Panc1 (cell line): ENCODE measurements at regions of chr2 and their contacts with region 1.

Region 1: DNA sequence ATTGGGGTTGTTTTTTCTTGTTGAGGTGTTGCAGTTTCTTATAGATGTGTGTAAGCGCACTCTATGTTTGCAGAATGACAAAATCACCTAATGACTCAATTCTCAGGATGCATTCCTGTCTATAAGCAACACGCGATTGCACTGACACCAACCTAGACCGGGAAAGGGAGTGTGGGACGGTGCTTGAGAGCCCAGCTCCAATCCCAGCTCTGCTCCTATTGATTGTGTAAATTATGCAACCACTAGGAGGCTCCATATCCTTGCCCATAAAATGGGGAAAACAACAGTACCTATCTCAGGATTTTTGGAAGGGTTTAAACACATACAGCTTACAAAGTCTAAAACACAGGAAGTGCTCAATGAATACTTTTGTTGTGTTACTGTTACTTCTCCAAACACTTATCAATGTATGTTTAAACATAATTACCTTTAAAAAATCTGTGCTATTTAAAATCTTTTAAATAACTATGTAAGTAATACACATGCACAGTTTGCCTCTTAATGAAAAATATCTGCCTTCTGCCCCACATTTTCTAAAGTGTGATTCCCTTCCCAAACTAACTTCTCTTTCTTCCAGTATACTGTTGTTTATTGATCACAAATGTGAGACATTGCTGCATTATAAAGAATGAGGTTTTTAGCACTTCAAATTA is 132.5 kb downstream of the SPHKAP start:
- DNase-seq: peak; percentile 77
- ATAC-seq: peak; percentile 95
- H3K4me3 ChIP-seq: no peak overlapping the region
- H3K27ac ChIP-seq: no peak overlapping the region
- H3K4me1 ChIP-seq: no peaks in the 10 kb centered on the region
- H3K27me3 ChIP-seq: no peaks in the 10 kb centered on the region
- CTCF ChIP-seq: peak; percentile 80

Region 2: DNA sequence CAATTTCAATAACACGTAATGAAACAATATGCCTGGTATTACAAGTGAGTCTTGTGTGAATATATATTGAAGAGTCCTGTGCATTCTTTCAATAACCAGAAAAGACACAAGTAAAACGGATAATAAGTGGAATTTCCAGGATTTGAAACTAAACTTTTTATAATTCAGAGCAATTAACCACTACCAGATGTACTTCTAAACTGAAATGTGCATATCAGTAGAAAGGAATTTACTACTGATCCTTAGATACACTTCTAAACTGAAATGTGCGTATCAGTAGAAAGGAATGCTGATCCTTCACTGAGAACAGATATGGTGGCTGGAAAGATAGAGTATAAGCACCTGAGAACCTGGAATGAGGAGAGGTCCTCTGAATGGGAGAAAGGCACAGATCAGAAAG is 603.4 kb after region 1 on chr2:
- CTCF ChIA-PET with region 1: no interaction called
- POLR2A ChIA-PET with region 1: no interaction called
- in situ Hi-C with region 1: no loop called
- intact Hi-C with region 1: loop called (anchors 2 kb)
- DNase-seq: no peak
- ATAC-seq: no peak
- H3K4me3 ChIP-seq: no peak overlapping the region
- H3K27ac ChIP-seq: no peak overlapping the region
- H3K4me1 ChIP-seq: no peaks in the 10 kb centered on the region
- H3K27me3 ChIP-seq: no peaks in the 10 kb centered on the region
- CTCF ChIP-seq: no peak